T-cell (primary cell): ENCODE measurements at regions of chr11 and their contacts with region 1.

Region 1: DNA sequence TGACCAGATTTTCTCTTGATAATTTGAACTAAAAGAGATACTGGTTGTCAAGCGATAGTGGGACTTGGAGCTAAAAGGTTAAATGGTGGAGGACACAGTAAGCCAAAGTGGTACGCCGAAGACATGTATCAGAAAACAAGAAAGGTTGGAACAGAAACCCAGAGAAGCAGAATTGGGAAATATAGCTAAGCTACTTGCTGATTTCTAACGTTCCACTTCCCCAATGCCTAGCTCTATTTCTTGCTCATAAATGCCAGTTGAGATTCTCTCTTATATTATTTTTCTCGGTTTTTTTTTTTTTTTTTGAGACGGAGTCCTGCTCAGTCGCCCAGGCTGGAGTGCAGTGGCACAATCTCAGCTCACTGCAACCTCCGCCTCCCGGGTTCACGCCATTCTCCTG is 12.7 kb downstream of the TMEM41B start:
- DNase-seq: no peak
- ATAC-seq: no peak
- H3K4me3 ChIP-seq: no peak overlapping the region
- H3K4me3 Mint-ChIP-seq: no peak overlapping the region
- H3K27ac ChIP-seq: no peak overlapping the region
- H3K27ac Mint-ChIP-seq: peak overlapping the region in 1 of 2 donors; percentile 22
- H3K4me1 ChIP-seq: no peaks in the 10 kb centered on the region
- H3K4me1 Mint-ChIP-seq: peaks cover 11 to 16% (median 14%) of the 10 kb centered on the region in 3 donors
- H3K27me3 ChIP-seq: no peaks in the 10 kb centered on the region
- H3K27me3 Mint-ChIP-seq: no peaks in the 10 kb centered on the region

Region 2: DNA sequence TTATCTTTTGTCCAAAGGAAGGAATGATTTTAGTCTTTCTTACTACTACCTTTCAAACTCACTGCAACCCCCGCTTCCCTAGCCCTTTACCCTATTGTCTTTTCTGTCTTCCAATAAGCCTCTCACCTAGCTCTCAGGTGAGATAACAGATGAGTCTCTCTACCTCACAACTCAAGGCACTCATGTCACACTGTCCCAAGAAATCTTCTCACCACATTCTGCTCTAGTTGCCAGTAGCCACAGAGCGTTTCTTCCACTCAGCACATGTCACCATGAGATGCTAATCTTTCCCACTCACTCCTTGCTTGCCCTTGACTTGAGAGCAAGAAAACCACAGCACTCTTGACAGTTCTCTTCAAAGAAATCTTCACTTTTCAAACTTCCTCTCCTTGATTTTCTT is 45.4 kb after region 1 on chr11:
- CTCF ChIA-PET with region 1: no interaction called
- POLR2A ChIA-PET with region 1: interaction called in 1 of 2 experiments, 10 read pairs
- DNase-seq: peak in 1 of 35 experiments; percentile 23
- ATAC-seq: peak; percentile 27 to 81 (median 44)
- H3K4me3 ChIP-seq: no peak overlapping the region
- H3K4me3 Mint-ChIP-seq: no peak overlapping the region
- H3K27ac ChIP-seq: no peak overlapping the region
- H3K27ac Mint-ChIP-seq: peak overlapping the region in 1 of 2 donors; percentile 2
- H3K4me1 ChIP-seq: peaks cover 8 to 12% of the 10 kb centered on the region in 2 experiments
- H3K4me1 Mint-ChIP-seq: peaks cover 17 to 21% (median 21%) of the 10 kb centered on the region in 3 donors
- H3K27me3 ChIP-seq: peaks cover 0 to 5% of the 10 kb centered on the region in 2 experiments
- H3K27me3 Mint-ChIP-seq: peaks cover 0 to 3% of the 10 kb centered on the region in 2 donors

Region 3: GRCh38 chr11:9397746-9398680 is 96.3 kb after region 1 on chr11:
- CTCF ChIA-PET with region 1: no interaction called
- POLR2A ChIA-PET with region 1: interaction called in 1 of 2 experiments, 10 read pairs
- DNase-seq: no peak
- ATAC-seq: no peak
- H3K4me3 ChIP-seq: no peak overlapping the region
- H3K4me3 Mint-ChIP-seq: no peak overlapping the region
- H3K27ac ChIP-seq: no peak overlapping the region
- H3K27ac Mint-ChIP-seq: peak overlapping the region; percentile 31 to 54
- H3K4me1 ChIP-seq: peaks cover 8 to 20% of the 10 kb centered on the region in 2 experiments
- H3K4me1 Mint-ChIP-seq: peaks cover 53 to 58% (median 54%) of the 10 kb centered on the region in 3 donors
- H3K27me3 ChIP-seq: no peaks in the 10 kb centered on the region
- H3K27me3 Mint-ChIP-seq: no peaks in the 10 kb centered on the region

Region 4: GRCh38 chr11:9565822-9566560 is 264.3 kb after region 1 on chr11:
- CTCF ChIA-PET with region 1: no interaction called
- POLR2A ChIA-PET with region 1: no interaction called
- DNase-seq: peak in 4 of 35 experiments; percentile 14 to 58 (median 16)
- ATAC-seq: peak; percentile 63 to 99 (median 94)
- H3K4me3 ChIP-seq: no peak overlapping the region
- H3K4me3 Mint-ChIP-seq: no peak overlapping the region
- H3K27ac ChIP-seq: no peak overlapping the region
- H3K27ac Mint-ChIP-seq: peak overlapping the region; percentile 69 to 82
- H3K4me1 ChIP-seq: peaks cover 0 to 10% of the 10 kb centered on the region in 2 experiments
- H3K4me1 Mint-ChIP-seq: peaks cover 0 to 27% (median 18%) of the 10 kb centered on the region in 3 donors
- H3K27me3 ChIP-seq: peaks cover 0 to 2% of the 10 kb centered on the region in 2 experiments
- H3K27me3 Mint-ChIP-seq: no peaks in the 10 kb centered on the region